Activated T-helper 1 cell treated with anti-CD3 and anti-CD28 coated beads, Interleukin-12 subunit alpha, Interleukin-12 subunit beta, Interleukin-2, Interleukin-4 antibody, amounts not matched to agents 30 ng/mL and 10 ng/mL and 1 ng/mL, durations not matched to agents 14 hours and 24 hours and 36 hours (primary cell): ENCODE measurements at regions of chr14 and their contacts with region 1.

Region 1: GRCh38 chr14:21014761-21015190 is 10.1 kb downstream of the NDRG2 start:
- DNase-seq: peak; percentile 58
- H3K4me3 Mint-ChIP-seq: no peak overlapping the region
- H3K27ac Mint-ChIP-seq: no peak overlapping the region
- H3K4me1 Mint-ChIP-seq: no peaks in the 10 kb centered on the region
- H3K27me3 Mint-ChIP-seq: peaks cover 19% of the 10 kb centered on the region

Region 2: GRCh38 chr14:21024585-21025370 is 10.0 kb after region 1 on chr14 and contains the start of gene NDRG2:
- intact Hi-C with region 1: loop called (anchors 1 kb)
- DNase-seq: peak; percentile 44
- H3K4me3 Mint-ChIP-seq: peak within 1 kb of the TSS; percentile 81
- H3K27ac Mint-ChIP-seq: no peak within 1 kb of the TSS
- H3K4me1 Mint-ChIP-seq: peaks cover 6% of the 10 kb centered on the region
- H3K27me3 Mint-ChIP-seq: peaks cover 38% of the 10 kb centered on the region
- total RNA-seq, gene NDRG2: 1.5 and 1.6 TPM in 2 replicates

Region 3: GRCh38 chr14:21039585-21040369 is 25.0 kb after region 1 on chr14:
- intact Hi-C with region 1: loop called (anchors 1 kb)
- DNase-seq: no peak
- H3K4me3 Mint-ChIP-seq: no peak overlapping the region
- H3K27ac Mint-ChIP-seq: no peak overlapping the region
- H3K4me1 Mint-ChIP-seq: no peaks in the 10 kb centered on the region
- H3K27me3 Mint-ChIP-seq: peaks cover 20% of the 10 kb centered on the region

Region 4: DNA sequence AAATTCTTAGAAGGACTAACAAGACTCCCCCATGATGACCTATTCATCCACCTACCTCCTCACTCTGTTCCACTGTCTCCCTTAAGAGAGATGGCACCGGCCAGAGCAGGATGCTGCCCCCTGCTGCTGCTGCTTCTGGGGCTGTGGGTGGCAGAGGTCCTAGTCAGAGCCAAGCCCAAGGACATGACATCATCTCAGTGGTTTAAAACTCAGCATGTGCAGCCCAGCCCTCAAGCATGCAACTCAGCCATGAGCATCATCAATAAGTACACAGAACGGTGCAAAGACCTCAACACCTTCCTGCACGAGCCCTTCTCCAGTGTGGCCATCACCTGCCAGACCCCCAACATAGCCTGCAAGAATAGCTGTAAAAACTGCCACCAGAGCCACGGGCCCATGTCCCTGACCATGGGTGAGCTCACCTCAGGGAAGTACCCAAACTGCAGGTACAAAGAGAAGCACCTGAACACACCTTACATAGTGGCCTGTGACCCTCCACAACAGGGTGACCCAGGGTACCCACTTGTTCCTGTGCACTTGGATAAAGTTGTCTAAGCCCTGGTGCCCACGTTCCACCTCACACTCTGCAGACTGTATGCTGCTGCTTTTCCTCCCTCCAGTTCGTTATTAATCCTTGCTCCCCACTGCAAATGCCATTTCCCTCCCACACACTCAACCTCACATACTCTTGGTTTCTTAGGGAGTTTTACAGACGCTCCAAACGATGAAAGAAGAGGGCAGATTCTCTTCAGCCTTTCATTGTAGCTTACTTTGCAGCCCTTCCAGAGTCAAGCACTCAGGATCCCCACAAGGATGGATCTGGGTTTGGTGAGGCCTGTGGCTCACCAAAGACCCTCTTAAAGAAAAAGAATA is 43.3 kb after region 1 on chr14 and contains the start of gene RNASE8:
- intact Hi-C with region 1: loop called (anchors 1 kb)
- DNase-seq: no peak
- H3K4me3 Mint-ChIP-seq: no peak within 1 kb of the TSS
- H3K27ac Mint-ChIP-seq: no peak within 1 kb of the TSS
- H3K4me1 Mint-ChIP-seq: no peaks in the 10 kb centered on the region
- H3K27me3 Mint-ChIP-seq: peaks cover 31% of the 10 kb centered on the region
- total RNA-seq, gene RNASE8: not detected in 2 replicates

Region 5: GRCh38 chr14:21071225-21072030 is 56.7 kb after region 1 on chr14:
- intact Hi-C with region 1: no loop called
- DNase-seq: no peak
- H3K4me3 Mint-ChIP-seq: peak overlapping the region; percentile 70
- H3K27ac Mint-ChIP-seq: no peak overlapping the region
- H3K4me1 Mint-ChIP-seq: peaks cover 32% of the 10 kb centered on the region
- H3K27me3 Mint-ChIP-seq: peaks cover 63% of the 10 kb centered on the region

Region 6: GRCh38 chr14:21092273-21093011 is 77.7 kb after region 1 on chr14:
- intact Hi-C with region 1: loop called (anchors 1 kb)
- DNase-seq: peak; percentile 87
- H3K4me3 Mint-ChIP-seq: no peak overlapping the region
- H3K27ac Mint-ChIP-seq: no peak overlapping the region
- H3K4me1 Mint-ChIP-seq: peaks cover 23% of the 10 kb centered on the region
- H3K27me3 Mint-ChIP-seq: peaks cover 8% of the 10 kb centered on the region

Region 7: DNA sequence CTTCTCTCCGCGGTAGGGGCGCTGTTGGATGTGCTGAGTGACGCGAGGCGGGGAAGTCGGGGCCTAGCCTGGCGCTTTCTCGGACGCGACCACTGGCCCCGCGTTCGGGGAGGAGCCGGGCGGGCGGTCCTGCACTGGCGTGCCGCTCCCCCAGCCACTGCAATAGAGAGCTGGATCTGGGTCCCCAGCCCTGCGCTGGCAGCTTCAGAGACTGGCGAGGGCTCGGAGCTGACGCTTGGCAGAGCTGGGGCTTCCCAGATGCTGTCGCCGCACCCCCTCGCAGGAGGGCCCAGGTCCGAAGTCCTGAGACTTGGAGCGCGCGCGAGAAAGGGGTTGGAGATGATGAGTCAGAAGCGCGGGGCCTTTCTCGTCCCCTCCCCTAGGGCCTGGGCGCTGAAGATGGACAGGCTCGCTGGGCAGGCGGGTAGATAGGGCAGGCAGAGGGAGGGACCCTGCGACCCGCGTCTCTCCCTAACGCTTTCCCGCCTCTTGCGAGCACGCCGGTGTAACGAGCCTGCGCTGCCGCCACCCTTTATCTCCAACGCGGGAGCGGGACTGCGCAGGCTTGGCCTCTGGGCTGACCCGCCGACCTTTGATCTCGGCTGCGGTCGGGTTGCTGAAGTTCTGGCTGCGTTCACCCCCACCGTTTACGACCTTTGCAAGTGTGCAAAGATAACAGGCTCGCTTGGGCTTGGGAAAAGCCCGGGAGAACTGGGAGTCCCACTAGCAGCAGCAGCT is 89.1 kb after region 1 on chr14:
- intact Hi-C with region 1: loop called (anchors 1 kb)
- DNase-seq: peak; percentile 92
- H3K4me3 Mint-ChIP-seq: peak overlapping the region; percentile 93
- H3K27ac Mint-ChIP-seq: peak overlapping the region; percentile 97
- H3K4me1 Mint-ChIP-seq: peaks cover 56% of the 10 kb centered on the region
- H3K27me3 Mint-ChIP-seq: peaks cover 6% of the 10 kb centered on the region